Thyroid gland (tissue), 4 donors: ENCODE measurements at regions of chr19 and their contacts with region 1.

Region 1: GRCh38 chr19:2750808-2751443 is 11.1 kb upstream of the SLC39A3 start:
- DNase-seq: no peak
- H3K4me3 ChIP-seq: no peak overlapping the region
- H3K27ac ChIP-seq: no peak overlapping the region
- H3K4me1 ChIP-seq: no peaks in the 10 kb centered on the region
- H3K27me3 ChIP-seq: no peaks in the 10 kb centered on the region
- CTCF ChIP-seq: no peak
- POLR2A ChIP-seq: no peak

Region 2: DNA sequence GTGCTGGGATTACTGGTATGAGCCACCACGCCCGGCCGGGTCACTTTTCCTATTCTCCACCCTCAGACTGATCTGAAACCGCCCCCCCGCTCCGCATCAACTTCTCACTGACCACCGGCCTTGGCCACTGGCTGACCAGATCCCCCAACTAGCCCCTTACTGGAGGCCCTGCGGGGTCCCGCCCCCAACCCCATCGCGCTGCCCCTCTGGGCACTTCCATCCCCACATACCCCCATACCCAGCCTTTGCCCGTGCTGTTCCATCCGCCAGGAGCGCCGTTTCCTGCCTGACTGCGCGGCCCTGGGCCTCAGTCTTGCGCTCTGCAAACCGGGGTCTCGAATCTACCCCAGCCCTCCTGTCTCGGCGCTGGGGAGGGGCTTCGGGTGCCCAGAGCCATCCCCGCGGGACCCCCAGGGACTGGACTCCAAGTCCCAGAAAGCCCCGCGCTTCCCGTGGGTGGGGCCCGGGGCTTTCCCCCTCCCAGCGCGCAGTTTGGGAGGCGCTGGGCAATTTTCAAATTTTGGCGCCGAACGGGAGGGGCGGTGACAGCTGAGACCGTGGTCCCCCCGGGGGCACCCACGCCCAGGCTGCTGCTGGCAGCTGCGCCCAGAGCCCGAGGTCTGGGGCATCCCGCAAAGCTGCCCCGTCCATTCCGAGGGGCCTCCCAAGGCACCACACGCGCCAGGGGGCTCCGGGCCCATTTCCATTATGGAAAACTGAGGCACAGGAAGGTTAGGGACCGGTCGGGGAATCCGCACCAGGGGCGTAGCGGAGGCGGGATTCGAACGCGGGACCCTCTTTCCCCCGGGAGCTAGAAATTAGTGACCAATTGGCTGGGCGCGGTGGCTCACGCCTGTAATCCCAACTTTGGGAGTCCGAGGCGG is 288.9 kb before region 1 on chr19:
- intact Hi-C with region 1: loop called (anchors 10 kb)
- DNase-seq: peak; percentile 22 to 31
- H3K4me3 ChIP-seq: peak overlapping the region in 2 of 3 donors; percentile 12 to 56
- H3K27ac ChIP-seq: no peak overlapping the region
- H3K4me1 ChIP-seq: peaks cover 8 to 17% of the 10 kb centered on the region in 2 donors
- H3K27me3 ChIP-seq: no peaks in the 10 kb centered on the region
- CTCF ChIP-seq: no peak
- POLR2A ChIP-seq: no peak

Region 3: GRCh38 chr19:2610637-2611482 is 140.1 kb before region 1 on chr19:
- intact Hi-C with region 1: no loop called
- DNase-seq: peak; percentile 94 to 95
- H3K4me3 ChIP-seq: peak overlapping the region in 1 of 3 donors; percentile 30
- H3K27ac ChIP-seq: peak overlapping the region; percentile 92 to 95 (median 94)
- H3K4me1 ChIP-seq: peaks cover 10 to 20% of the 10 kb centered on the region in 2 donors
- H3K27me3 ChIP-seq: no peaks in the 10 kb centered on the region
- CTCF ChIP-seq: peak; percentile 95 to 98 (median 97)
- POLR2A ChIP-seq: peak in 1 of 2 donors; percentile 68

Region 4: DNA sequence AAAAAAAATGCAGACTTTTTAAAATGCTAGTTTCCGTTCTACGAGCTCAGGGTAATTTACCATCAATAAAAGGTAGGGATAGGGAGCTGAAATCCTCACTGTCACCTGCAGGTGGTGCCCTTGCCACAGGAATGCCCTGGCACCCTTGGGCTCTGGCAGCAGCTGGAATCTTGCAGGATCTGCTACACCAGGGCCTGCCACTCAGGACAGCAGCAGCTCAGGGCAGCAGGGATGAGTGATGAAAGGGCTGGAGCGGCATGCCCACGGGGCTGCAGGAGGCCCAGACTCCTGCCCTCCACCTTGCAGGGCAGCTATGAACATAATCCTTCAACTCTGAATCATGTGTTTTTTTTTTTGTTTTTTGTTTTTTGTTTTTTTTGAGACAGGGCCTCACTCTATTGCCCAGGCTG is 102.4 kb before region 1 on chr19:
- intact Hi-C with region 1: loop called (anchors 5 kb)
- DNase-seq: peak; percentile 81 to 86
- H3K4me3 ChIP-seq: no peak overlapping the region
- H3K27ac ChIP-seq: no peak overlapping the region
- H3K4me1 ChIP-seq: no peaks in the 10 kb centered on the region
- H3K27me3 ChIP-seq: no peaks in the 10 kb centered on the region
- CTCF ChIP-seq: peak in 5 of 6 experiments; percentile 77 to 96 (median 91)
- POLR2A ChIP-seq: no peak

Region 5: GRCh38 chr19:2795827-2796658 is 45.1 kb after region 1 on chr19:
- intact Hi-C with region 1: no loop called
- DNase-seq: no peak
- H3K4me3 ChIP-seq: no peak overlapping the region
- H3K27ac ChIP-seq: no peak overlapping the region
- H3K4me1 ChIP-seq: peaks cover 13 to 31% of the 10 kb centered on the region in 2 donors
- H3K27me3 ChIP-seq: no peaks in the 10 kb centered on the region
- CTCF ChIP-seq: no peak
- POLR2A ChIP-seq: no peak